Panc1 (cell line): ENCODE measurements at regions of chrX and their contacts with region 1.

Region 1: GRCh38 chrX:21839334-21840192 is at the start of gene MBTPS2:
- DNase-seq: peak; percentile 30
- ATAC-seq: peak; percentile 92
- H3K4me3 ChIP-seq: peak within 1 kb of the TSS; percentile 58 to 64
- H3K27ac ChIP-seq: peak within 1 kb of the TSS; percentile 81
- H3K4me1 ChIP-seq: no peaks in the 10 kb centered on the region
- H3K27me3 ChIP-seq: no peaks in the 10 kb centered on the region
- CTCF ChIP-seq: peak; percentile 41
- total RNA-seq, gene MBTPS2: 13.5 TPM

Region 2: DNA sequence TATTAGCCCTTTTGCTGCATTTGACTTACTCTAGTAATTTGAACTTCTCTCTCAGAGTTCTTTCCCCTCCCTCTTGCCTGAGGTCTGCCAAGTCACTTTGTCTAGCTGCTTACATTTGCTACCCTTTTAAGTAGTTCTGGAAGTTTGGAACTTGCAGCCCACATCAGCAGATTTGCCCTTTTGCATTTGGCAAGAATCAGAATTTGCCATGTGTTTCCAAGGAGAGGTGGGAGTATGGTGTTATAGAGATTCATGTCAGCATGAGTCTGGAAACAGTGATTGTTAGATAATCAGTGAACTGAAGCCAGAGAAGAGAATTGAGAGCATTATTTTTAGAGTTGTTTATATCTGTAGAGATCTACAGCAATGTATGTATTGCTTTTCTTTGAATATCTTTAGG is 233.6 kb before region 1 on chrX:
- CTCF ChIA-PET with region 1: no interaction called
- POLR2A ChIA-PET with region 1: no interaction called
- in situ Hi-C with region 1: no loop called
- intact Hi-C with region 1: no loop called
- DNase-seq: no peak
- ATAC-seq: no peak
- H3K4me3 ChIP-seq: no peak overlapping the region
- H3K27ac ChIP-seq: no peak overlapping the region
- H3K4me1 ChIP-seq: no peaks in the 10 kb centered on the region
- H3K27me3 ChIP-seq: no peaks in the 10 kb centered on the region
- CTCF ChIP-seq: no peak

Region 3: GRCh38 chrX:21674430-21675186 is 165.0 kb before region 1 on chrX:
- CTCF ChIA-PET with region 1: interaction called, 10 read pairs
- POLR2A ChIA-PET with region 1: no interaction called
- in situ Hi-C with region 1: no loop called
- intact Hi-C with region 1: no loop called
- DNase-seq: no peak
- ATAC-seq: no peak
- H3K4me3 ChIP-seq: no peak overlapping the region
- H3K27ac ChIP-seq: no peak overlapping the region
- H3K4me1 ChIP-seq: no peaks in the 10 kb centered on the region
- H3K27me3 ChIP-seq: no peaks in the 10 kb centered on the region
- CTCF ChIP-seq: no peak

Region 4: DNA sequence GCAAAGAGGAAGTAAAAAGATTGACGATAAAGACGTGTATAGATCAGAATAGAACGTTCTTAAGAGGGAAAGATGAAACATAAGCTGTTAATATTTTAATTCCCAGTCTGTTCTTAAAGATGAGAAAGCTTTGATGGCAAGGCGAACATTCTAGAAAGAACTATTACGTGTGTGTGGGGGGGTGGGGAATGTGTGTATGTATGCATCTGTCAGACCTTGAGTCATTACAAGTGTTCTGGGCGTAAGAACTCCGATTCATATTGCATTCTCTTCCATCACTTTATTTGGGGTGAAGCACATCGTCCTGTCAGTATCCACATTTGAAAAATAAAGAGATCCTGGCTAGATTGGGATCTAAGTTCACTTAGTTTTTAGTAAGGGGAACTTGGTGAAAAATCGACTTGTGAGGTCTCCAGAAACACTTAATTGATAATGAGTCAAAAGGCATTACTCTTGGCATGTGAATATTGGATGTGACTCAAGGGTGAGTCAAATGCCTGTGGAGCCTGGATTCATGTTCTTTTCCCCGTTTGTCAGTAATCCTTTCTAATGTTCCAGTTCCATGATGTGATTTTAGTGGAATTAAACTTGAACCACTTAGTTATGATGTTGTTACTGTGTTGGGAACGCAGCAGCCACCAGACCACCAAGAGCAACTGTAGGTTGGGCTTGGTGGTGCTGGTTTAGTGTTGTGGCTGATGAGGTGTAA is 104.1 kb after region 1 on chrX:
- CTCF ChIA-PET with region 1: no interaction called
- POLR2A ChIA-PET with region 1: no interaction called
- in situ Hi-C with region 1: no loop called
- intact Hi-C with region 1: loop called (anchors 2 kb)
- DNase-seq: peak; percentile 61
- ATAC-seq: no peak
- H3K4me3 ChIP-seq: peak overlapping the region; percentile 54 to 66
- H3K27ac ChIP-seq: peak overlapping the region; percentile 77
- H3K4me1 ChIP-seq: peaks cover 15% of the 10 kb centered on the region
- H3K27me3 ChIP-seq: no peaks in the 10 kb centered on the region
- CTCF ChIP-seq: no peak